ENCODE measurements at regions of chr1 and their contacts with region 1.

Region 1: GRCh38 chr1:172002725-172003345 is 161.5 kb downstream of the DNM3 start:
- DNase-seq: peak; percentile 94
- ATAC-seq: peak; percentile 45
- H3K4me3 ChIP-seq: no peak overlapping the region
- H3K27ac ChIP-seq: no peak overlapping the region
- H3K4me1 ChIP-seq: peaks cover 29% of the 10 kb centered on the region
- H3K27me3 ChIP-seq: no peaks in the 10 kb centered on the region
- CTCF ChIP-seq: peak; percentile 100

Region 2: GRCh38 chr1:171801487-171801891 is 201.3 kb before region 1 on chr1:
- CTCF ChIA-PET with region 1: interaction called, 11 read pairs
- POLR2A ChIA-PET with region 1: no interaction called
- intact Hi-C with region 1: no loop called
- DNase-seq: peak; percentile 88
- ATAC-seq: peak; percentile 74
- H3K4me3 ChIP-seq: no peak overlapping the region
- H3K27ac ChIP-seq: no peak overlapping the region
- H3K4me1 ChIP-seq: no peaks in the 10 kb centered on the region
- H3K27me3 ChIP-seq: no peaks in the 10 kb centered on the region
- CTCF ChIP-seq: peak; percentile 99

Region 3: GRCh38 chr1:171973421-171973820 is 29.4 kb before region 1 on chr1:
- CTCF ChIA-PET with region 1: no interaction called
- POLR2A ChIA-PET with region 1: no interaction called
- intact Hi-C with region 1: no loop called
- DNase-seq: no peak
- ATAC-seq: no peak
- H3K4me3 ChIP-seq: no peak overlapping the region
- H3K27ac ChIP-seq: no peak overlapping the region
- H3K4me1 ChIP-seq: no peaks in the 10 kb centered on the region
- H3K27me3 ChIP-seq: peaks cover 68% of the 10 kb centered on the region
- CTCF ChIP-seq: no peak

Region 4: GRCh38 chr1:172041742-172042141 is 38.9 kb after region 1 on chr1:
- CTCF ChIA-PET with region 1: interaction called, 17 read pairs
- POLR2A ChIA-PET with region 1: no interaction called
- intact Hi-C with region 1: loop called (anchors 1 kb)
- DNase-seq: peak; percentile 72
- ATAC-seq: peak; percentile 48
- H3K4me3 ChIP-seq: no peak overlapping the region
- H3K27ac ChIP-seq: no peak overlapping the region
- H3K4me1 ChIP-seq: peaks cover 19% of the 10 kb centered on the region
- H3K27me3 ChIP-seq: no peaks in the 10 kb centered on the region
- CTCF ChIP-seq: peak; percentile 80

Region 5: DNA sequence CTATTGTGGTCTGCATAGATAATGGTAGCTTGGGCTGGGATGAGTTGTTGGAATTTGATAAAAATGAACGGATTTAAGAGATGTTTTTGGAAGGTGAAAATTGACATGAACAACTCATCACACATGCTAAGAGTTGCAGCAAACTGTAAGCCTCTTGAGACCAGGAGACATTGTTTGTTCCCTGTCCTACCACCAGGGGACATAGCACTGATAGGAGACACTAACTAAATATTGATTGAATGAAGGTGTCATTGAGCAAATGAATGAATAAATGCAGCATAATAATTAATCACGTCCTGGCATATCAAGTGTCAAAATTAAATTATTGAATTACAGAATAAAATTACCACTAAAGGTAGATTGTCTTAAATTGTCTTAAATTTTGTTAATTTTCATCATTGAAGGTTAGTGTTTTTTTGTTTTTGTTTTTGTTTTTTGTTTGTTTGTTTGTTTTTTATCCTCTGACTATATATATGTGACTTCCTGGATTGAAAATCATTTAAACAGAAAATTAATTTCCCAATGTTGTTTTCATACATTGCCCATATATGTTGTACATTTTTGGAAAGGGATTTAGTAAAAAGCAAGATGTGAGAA is 132.3 kb after region 1 on chr1:
- CTCF ChIA-PET with region 1: no interaction called
- POLR2A ChIA-PET with region 1: no interaction called
- intact Hi-C with region 1: loop called (anchors 2 kb)
- DNase-seq: peak; percentile 76
- ATAC-seq: 0 out of 2 replicates have a peak, but pooled peaks have one; percentile 29
- H3K4me3 ChIP-seq: no peak overlapping the region
- H3K27ac ChIP-seq: no peak overlapping the region
- H3K4me1 ChIP-seq: peaks cover 12% of the 10 kb centered on the region; the same call in 1 of the 2 replicates
- H3K27me3 ChIP-seq: no peaks in the 10 kb centered on the region
- CTCF ChIP-seq: peak; percentile 99

Region 6: GRCh38 chr1:172154551-172154950 is 151.7 kb after region 1 on chr1:
- CTCF ChIA-PET with region 1: no interaction called
- POLR2A ChIA-PET with region 1: no interaction called
- intact Hi-C with region 1: no loop called
- DNase-seq: peak; percentile 90
- ATAC-seq: peak; percentile 99
- H3K4me3 ChIP-seq: peak overlapping the region; percentile 3; the same call in 1 of the 2 replicates
- H3K27ac ChIP-seq: peak overlapping the region; percentile 47
- H3K4me1 ChIP-seq: peaks cover 16% of the 10 kb centered on the region
- H3K27me3 ChIP-seq: no peaks in the 10 kb centered on the region
- CTCF ChIP-seq: no peak

Region 7: DNA sequence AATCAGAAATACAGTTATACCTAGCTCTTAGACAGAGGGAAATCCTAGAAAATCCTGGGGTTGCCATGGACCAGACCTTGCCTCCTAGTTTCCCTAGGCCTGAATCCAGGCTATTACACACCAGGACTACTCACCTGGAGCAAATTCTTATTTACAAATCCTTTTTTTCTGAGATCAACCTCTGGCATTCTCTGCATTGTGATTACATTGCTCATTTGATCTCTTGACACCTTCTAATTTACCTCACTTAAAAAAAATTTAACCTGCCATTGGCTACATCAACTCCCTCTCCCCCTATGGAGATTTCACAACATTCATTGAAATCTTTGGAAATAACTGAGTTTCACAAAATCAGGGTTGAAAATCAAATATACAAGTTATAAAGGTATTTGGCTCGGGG is 414.7 kb after region 1 on chr1:
- CTCF ChIA-PET with region 1: interaction called, 11 read pairs
- POLR2A ChIA-PET with region 1: no interaction called
- intact Hi-C with region 1: no loop called
- DNase-seq: peak; percentile 95
- ATAC-seq: peak; percentile 50
- H3K4me3 ChIP-seq: no peak overlapping the region
- H3K27ac ChIP-seq: no peak overlapping the region
- H3K4me1 ChIP-seq: peaks cover 27% of the 10 kb centered on the region
- H3K27me3 ChIP-seq: no peaks in the 10 kb centered on the region
- CTCF ChIP-seq: no peak

Region 8: DNA sequence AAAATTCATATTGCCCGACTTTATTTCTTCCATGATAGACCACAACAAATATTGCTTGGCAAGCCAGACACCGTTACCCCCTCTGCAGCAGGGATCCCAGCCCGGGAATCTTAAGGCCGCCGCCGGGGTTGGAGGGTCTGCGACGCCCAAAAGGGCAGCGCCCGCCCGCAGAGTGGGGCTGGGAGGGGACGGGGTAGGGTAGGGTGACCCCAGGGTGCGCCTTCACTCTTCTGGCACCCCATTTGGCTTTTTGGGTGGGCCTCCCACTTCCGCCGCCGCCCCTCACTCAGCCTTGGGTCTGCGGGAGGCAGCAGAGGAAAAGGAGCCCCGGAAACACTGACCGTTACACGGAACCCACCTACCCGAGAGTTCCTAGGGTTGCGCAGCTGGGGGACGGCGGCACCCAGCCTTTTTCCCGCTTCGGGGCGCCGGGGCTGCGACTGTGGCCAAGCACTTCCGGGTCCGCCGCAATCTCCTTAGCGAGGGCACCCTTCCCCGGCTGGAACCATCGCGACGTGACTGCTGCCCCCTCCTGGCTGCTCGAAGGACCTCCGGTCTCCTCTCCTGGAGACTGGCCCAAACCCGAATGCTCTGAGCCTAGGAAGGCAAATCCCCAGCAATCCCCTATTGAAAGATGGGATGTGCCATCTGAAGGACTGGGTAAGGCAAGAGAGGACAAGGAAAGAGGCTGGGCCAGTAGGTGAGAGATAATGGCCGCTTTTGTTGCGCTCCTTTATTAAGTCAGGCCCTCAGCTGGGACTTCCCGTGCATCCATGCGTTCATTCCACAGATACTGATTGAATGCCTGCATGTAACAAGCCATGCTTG is 441.0 kb after region 1 on chr1 and contains the start of gene PIGC:
- CTCF ChIA-PET with region 1: interaction called, 4 read pairs
- POLR2A ChIA-PET with region 1: no interaction called
- intact Hi-C with region 1: loop called (anchors 1 kb)
- DNase-seq: peak; percentile 99
- ATAC-seq: peak; percentile 76
- H3K4me3 ChIP-seq: peak within 1 kb of the TSS; percentile 75
- H3K27ac ChIP-seq: peak within 1 kb of the TSS; percentile 69
- H3K4me1 ChIP-seq: peaks cover 47% of the 10 kb centered on the region
- H3K27me3 ChIP-seq: no peaks in the 10 kb centered on the region
- CTCF ChIP-seq: peak; percentile 100
- total RNA-seq, gene PIGC: 57.5 and 70.5 TPM in 2 replicates

Measured in PC-3 (cell line).